ENCODE measurements at regions of chr18 and their contacts with region 1.

Region 1: DNA sequence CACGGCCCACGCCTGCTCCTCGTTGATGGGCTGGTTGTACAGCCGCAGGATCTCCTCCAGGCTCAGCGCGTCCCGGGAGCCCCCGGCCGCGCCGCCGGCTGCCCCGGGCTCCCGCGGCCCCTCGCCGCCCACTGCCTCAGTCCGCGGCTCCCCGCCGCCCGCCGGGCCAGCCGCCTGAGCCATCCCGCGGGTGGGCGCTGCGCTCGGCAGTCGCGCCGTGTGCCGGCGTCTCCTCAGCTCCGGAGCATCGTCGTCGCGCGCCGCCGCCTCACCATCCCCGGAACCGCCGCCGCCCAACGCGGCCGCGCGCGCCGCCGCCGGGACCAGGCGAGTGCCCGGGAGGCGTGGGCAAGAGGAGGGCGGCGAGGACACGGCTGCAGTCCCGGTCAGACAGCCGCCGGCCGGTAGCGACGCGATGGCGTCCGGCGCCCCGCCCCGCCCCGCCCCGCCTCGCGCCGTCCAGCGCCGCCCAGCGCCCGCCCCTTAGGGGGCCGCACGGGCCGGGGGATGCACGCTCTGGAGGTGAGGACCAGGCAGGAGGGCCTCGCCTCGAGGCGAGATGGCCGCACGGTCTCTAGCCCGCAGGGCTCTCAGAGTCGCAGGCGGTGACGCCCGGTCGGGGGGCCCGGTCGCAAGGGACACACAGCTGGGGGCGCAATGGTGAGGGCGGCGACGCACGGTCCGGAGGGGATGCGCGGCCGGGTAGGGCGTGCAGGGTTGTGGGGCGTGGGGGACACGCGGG is at the start of gene SPIRE1:
- DNase-seq: no peak
- ATAC-seq: peak; percentile 82
- H3K4me3 ChIP-seq: peak within 1 kb of the TSS; percentile 73
- H3K27ac ChIP-seq: no peak within 1 kb of the TSS
- H3K4me1 ChIP-seq: no peaks in the 10 kb centered on the region
- H3K27me3 ChIP-seq: peaks cover 0 to 2% of the 10 kb centered on the region in 2 experiments; a peak in 2 of 4 replicates
- CTCF ChIP-seq: no peak
- EP300 ChIP-seq: no peak
- POLR2A ChIP-seq: peak; percentile 43; the same call in 1 of the 2 replicates
- RAD21 ChIP-seq: no peak
- polyA plus RNA-seq, gene SPIRE1: 1.9 to 2.6 TPM

Region 2: DNA sequence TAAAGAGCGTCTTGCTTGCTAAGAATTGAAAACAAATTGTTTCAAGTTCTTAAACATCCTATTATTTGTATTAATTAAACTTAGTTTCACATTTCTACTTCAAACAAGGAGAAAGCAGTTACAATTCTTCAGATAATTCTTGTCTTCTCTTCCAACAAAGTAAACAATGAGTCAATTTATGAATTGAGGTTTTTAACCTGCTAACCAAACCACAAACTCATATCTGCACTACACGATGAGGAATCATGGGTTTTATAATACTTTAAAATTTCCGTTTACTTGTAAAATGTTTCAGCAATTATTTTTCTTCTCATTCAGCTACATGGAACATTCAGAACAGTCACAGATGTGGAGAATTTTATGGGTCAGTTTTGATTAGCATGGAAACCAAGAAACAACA is 114.2 kb before region 1 on chr18:
- CTCF ChIA-PET with region 1: interaction called, 3 read pairs
- POLR2A ChIA-PET with region 1: no interaction called
- RAD21 ChIA-PET with region 1: no interaction called
- SMC1A ChIA-PET with region 1: no interaction called
- in situ Hi-C with region 1: no loop called
- intact Hi-C with region 1: loop called (anchors 5 kb)
- DNase-seq: no peak
- ATAC-seq: no peak
- H3K4me3 ChIP-seq: no peak overlapping the region
- H3K27ac ChIP-seq: no peak overlapping the region
- H3K4me1 ChIP-seq: no peaks in the 10 kb centered on the region
- H3K27me3 ChIP-seq: no peaks in the 10 kb centered on the region
- CTCF ChIP-seq: no peak
- EP300 ChIP-seq: no peak
- POLR2A ChIP-seq: no peak
- RAD21 ChIP-seq: no peak

Region 3: DNA sequence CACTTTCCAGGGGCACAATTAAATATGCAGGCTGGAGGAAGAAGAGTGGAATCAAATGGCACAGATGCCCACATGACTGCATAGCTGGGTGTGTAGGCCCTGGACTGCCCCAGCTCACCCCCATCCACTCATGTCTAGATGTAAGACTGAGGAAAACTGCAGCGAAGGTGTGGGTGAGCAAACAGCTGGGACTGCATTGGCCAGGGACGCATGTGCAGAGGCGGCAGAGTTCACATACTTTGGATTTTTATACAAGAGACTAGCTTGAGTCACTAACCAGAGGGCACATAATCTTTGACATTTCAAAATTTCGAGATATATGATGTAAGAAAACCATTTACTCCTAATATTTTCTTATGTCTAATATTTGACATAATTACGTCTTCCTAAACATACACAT is 60.1 kb before region 1 on chr18:
- CTCF ChIA-PET with region 1: no interaction called
- POLR2A ChIA-PET with region 1: no interaction called
- RAD21 ChIA-PET with region 1: no interaction called
- SMC1A ChIA-PET with region 1: no interaction called
- in situ Hi-C with region 1: no loop called
- intact Hi-C with region 1: loop called (anchors 5 kb)
- DNase-seq: no peak
- ATAC-seq: no peak
- H3K4me3 ChIP-seq: no peak overlapping the region
- H3K27ac ChIP-seq: no peak overlapping the region
- H3K4me1 ChIP-seq: no peaks in the 10 kb centered on the region
- H3K27me3 ChIP-seq: no peaks in the 10 kb centered on the region
- CTCF ChIP-seq: no peak
- EP300 ChIP-seq: no peak
- POLR2A ChIP-seq: no peak
- RAD21 ChIP-seq: no peak

Region 4: DNA sequence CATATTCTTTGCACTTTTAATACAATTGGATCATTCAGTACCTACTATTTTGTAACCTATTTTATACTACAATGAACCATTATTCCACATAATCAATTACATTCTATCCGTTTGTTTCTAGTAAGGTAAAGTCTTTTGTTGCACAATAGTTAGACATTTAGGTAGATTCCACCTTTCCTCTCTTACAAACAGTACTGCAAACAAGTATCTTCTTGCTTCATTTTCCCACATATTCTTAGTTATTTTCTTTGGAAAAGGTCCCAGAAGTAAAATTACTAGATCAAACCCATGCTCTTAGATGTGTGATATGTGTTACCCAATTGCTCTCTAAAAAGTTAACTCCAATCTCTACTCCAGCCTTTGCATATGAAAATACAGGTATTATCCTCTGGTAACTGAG is 49.6 kb before region 1 on chr18:
- CTCF ChIA-PET with region 1: no interaction called
- POLR2A ChIA-PET with region 1: no interaction called
- RAD21 ChIA-PET with region 1: no interaction called
- SMC1A ChIA-PET with region 1: no interaction called
- in situ Hi-C with region 1: no loop called
- intact Hi-C with region 1: no loop called
- DNase-seq: no peak
- ATAC-seq: no peak
- H3K4me3 ChIP-seq: no peak overlapping the region
- H3K27ac ChIP-seq: no peak overlapping the region
- H3K4me1 ChIP-seq: no peaks in the 10 kb centered on the region
- H3K27me3 ChIP-seq: no peaks in the 10 kb centered on the region
- CTCF ChIP-seq: no peak
- EP300 ChIP-seq: no peak
- POLR2A ChIP-seq: no peak
- RAD21 ChIP-seq: no peak